Endothelial cell of umbilical vein (primary cell): ENCODE measurements at regions of chr6 and their contacts with region 1.

Region 1: GRCh38 chr6:37607944-37608343 is 89.7 kb downstream of the MDGA1 start:
- DNase-seq: peak; percentile 12
- H3K4me3 ChIP-seq: no peak overlapping the region
- H3K27ac ChIP-seq: no peak overlapping the region
- H3K4me1 ChIP-seq: no peaks in the 10 kb centered on the region
- H3K27me3 ChIP-seq: peaks cover 20 to 24% of the 10 kb centered on the region in 2 experiments
- CTCF ChIP-seq: peak in 1 of 2 donors; percentile 41
- POLR2A ChIP-seq: no peak

Region 2: GRCh38 chr6:37459981-37460800 is 147.8 kb before region 1 on chr6:
- CTCF ChIA-PET with region 1: no interaction called
- POLR2A ChIA-PET with region 1: no interaction called
- dilution Hi-C with region 1: no loop called
- intact Hi-C with region 1: no loop called
- DNase-seq: no peak
- H3K4me3 ChIP-seq: no peak overlapping the region
- H3K27ac ChIP-seq: no peak overlapping the region
- H3K4me1 ChIP-seq: peaks cover 4% of the 10 kb centered on the region
- H3K27me3 ChIP-seq: no peaks in the 10 kb centered on the region
- CTCF ChIP-seq: no peak
- POLR2A ChIP-seq: no peak

Region 3: GRCh38 chr6:37618916-37619590 is 11.1 kb after region 1 on chr6:
- CTCF ChIA-PET with region 1: interaction called, 20 read pairs
- POLR2A ChIA-PET with region 1: no interaction called
- dilution Hi-C with region 1: no loop called
- intact Hi-C with region 1: no loop called
- DNase-seq: no peak
- H3K4me3 ChIP-seq: no peak overlapping the region
- H3K27ac ChIP-seq: no peak overlapping the region
- H3K4me1 ChIP-seq: no peaks in the 10 kb centered on the region
- H3K27me3 ChIP-seq: peaks cover 6 to 35% of the 10 kb centered on the region in 2 experiments
- CTCF ChIP-seq: no peak
- POLR2A ChIP-seq: no peak

Region 4: GRCh38 chr6:37648465-37649330 is 40.8 kb after region 1 on chr6:
- CTCF ChIA-PET with region 1: interaction called, 36 read pairs
- POLR2A ChIA-PET with region 1: no interaction called
- dilution Hi-C with region 1: no loop called
- intact Hi-C with region 1: no loop called
- DNase-seq: no peak
- H3K4me3 ChIP-seq: no peak overlapping the region
- H3K27ac ChIP-seq: no peak overlapping the region
- H3K4me1 ChIP-seq: peaks cover 7% of the 10 kb centered on the region
- H3K27me3 ChIP-seq: peaks cover 14 to 28% of the 10 kb centered on the region in 2 experiments
- CTCF ChIP-seq: no peak
- POLR2A ChIP-seq: no peak

Region 5: GRCh38 chr6:37653933-37654565 is 46.1 kb after region 1 on chr6:
- CTCF ChIA-PET with region 1: interaction called, 36 read pairs
- POLR2A ChIA-PET with region 1: no interaction called
- dilution Hi-C with region 1: no loop called
- intact Hi-C with region 1: loop called (anchors 1 kb)
- DNase-seq: peak; percentile 47
- H3K4me3 ChIP-seq: no peak overlapping the region
- H3K27ac ChIP-seq: no peak overlapping the region
- H3K4me1 ChIP-seq: no peaks in the 10 kb centered on the region
- H3K27me3 ChIP-seq: peaks cover 8 to 22% of the 10 kb centered on the region in 2 experiments
- CTCF ChIP-seq: peak; percentile 54 to 77
- POLR2A ChIP-seq: no peak

Region 6: GRCh38 chr6:37665304-37665703 is 57.4 kb after region 1 on chr6:
- CTCF ChIA-PET with region 1: interaction called, 11 read pairs
- POLR2A ChIA-PET with region 1: no interaction called
- dilution Hi-C with region 1: no loop called
- intact Hi-C with region 1: no loop called
- DNase-seq: no peak
- H3K4me3 ChIP-seq: no peak overlapping the region
- H3K27ac ChIP-seq: no peak overlapping the region
- H3K4me1 ChIP-seq: no peaks in the 10 kb centered on the region
- H3K27me3 ChIP-seq: peaks cover 3 to 10% of the 10 kb centered on the region in 2 experiments
- CTCF ChIP-seq: no peak
- POLR2A ChIP-seq: no peak